Heart right ventricle (tissue), 16 donors: ENCODE measurements at regions of chr17 and their contacts with region 1.

Region 1: GRCh38 chr17:29710891-29711418 is 88.2 kb upstream of the CORO6 start:
- DNase-seq: no peak
- ATAC-seq: no peak
- H3K4me3 ChIP-seq: no peak overlapping the region
- H3K27ac ChIP-seq: peak overlapping the region in 7 of 10 donors; percentile 3 to 92 (median 26)
- H3K4me1 ChIP-seq: peaks cover 6 to 94% (median 73%) of the 10 kb centered on the region in 9 donors
- H3K27me3 ChIP-seq: no peaks in the 10 kb centered on the region
- CTCF ChIP-seq: no peak

Region 2: GRCh38 chr17:29653995-29654714 is 56.8 kb before region 1 on chr17:
- intact Hi-C with region 1: no loop called
- DNase-seq: no peak
- ATAC-seq: no peak
- H3K4me3 ChIP-seq: no peak overlapping the region
- H3K27ac ChIP-seq: no peak overlapping the region
- H3K4me1 ChIP-seq: peaks cover 0 to 11% (median 0%) of the 10 kb centered on the region in 9 donors
- H3K27me3 ChIP-seq: no peaks in the 10 kb centered on the region
- CTCF ChIP-seq: no peak

Region 3: DNA sequence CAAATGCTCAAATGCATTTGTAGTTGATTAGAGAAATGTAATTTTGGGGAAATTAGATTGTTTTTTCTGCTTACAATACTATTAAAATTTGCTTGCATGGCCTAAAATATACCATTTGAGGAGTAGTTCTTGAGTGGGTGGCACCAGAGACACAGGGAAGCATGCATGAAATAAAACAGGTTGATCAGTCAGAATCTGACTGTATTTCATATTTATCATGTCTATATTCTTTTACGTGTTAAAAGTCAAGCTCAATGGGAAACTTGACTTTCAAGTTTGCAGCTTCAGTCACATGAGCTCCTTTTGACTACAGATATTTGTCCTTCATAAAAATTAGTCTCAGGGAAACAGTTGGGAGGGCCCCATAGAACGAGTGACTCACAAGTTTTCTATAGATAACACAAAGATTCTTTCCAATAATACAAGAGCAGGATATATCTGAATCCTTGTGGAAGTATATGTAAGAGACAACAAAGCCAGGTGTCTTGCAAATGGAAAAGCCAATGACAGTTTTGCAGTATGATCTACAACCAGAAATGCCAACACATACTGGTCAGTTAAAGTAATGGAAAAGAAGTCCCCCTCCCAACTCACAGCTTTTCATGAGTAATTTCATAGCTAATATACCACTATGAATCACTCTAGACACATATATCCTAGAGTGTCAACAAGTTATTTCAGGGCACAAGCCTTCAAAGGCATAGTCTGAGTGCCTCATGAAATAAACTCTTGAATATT is 46.0 kb before region 1 on chr17:
- intact Hi-C with region 1: loop called in 1 of 10 experiments (anchors 5 kb)
- DNase-seq: no peak
- ATAC-seq: peak in 2 of 8 donors; percentile 15 to 31
- H3K4me3 ChIP-seq: no peak overlapping the region
- H3K27ac ChIP-seq: peak overlapping the region in 8 of 10 donors; percentile 10 to 85 (median 52)
- H3K4me1 ChIP-seq: peaks cover 0 to 63% (median 24%) of the 10 kb centered on the region in 9 donors
- H3K27me3 ChIP-seq: no peaks in the 10 kb centered on the region
- CTCF ChIP-seq: no peak

Region 4: GRCh38 chr17:29677221-29677791 is 33.6 kb before region 1 on chr17:
- intact Hi-C with region 1: no loop called
- DNase-seq: peak in 1 of 2 donors; percentile 34
- ATAC-seq: peak; percentile 64 to 93 (median 86)
- H3K4me3 ChIP-seq: no peak overlapping the region
- H3K27ac ChIP-seq: peak overlapping the region; percentile 21 to 80 (median 68)
- H3K4me1 ChIP-seq: peaks cover under 1 to 67% (median 43%) of the 10 kb centered on the region in 9 donors
- H3K27me3 ChIP-seq: no peaks in the 10 kb centered on the region
- CTCF ChIP-seq: no peak

Region 5: GRCh38 chr17:29941334-29941733 is 230.4 kb after region 1 on chr17 and contains the start of gene EFCAB5:
- intact Hi-C with region 1: no loop called
- DNase-seq: no peak
- ATAC-seq: no peak
- H3K4me3 ChIP-seq: no peak within 1 kb of the TSS
- H3K27ac ChIP-seq: no peak within 1 kb of the TSS
- H3K4me1 ChIP-seq: no peaks in the 10 kb centered on the region
- H3K27me3 ChIP-seq: peaks cover 0 to 3% (median 0%) of the 10 kb centered on the region in 7 donors
- CTCF ChIP-seq: no peak
- total RNA-seq, gene EFCAB5: 0.23 to 0.52 TPM in 2 of 10 donors, not detected in the others